GM12878 (cell line): ENCODE measurements at regions of chr6 and their contacts with region 1.

Region 1: GRCh38 chr6:49625140-49625539 is 11.5 kb downstream of the RHAG start:
- DNase-seq: no peak
- ATAC-seq: no peak
- H3K4me3 ChIP-seq: no peak overlapping the region
- H3K27ac ChIP-seq: no peak overlapping the region
- H3K4me1 ChIP-seq: no peaks in the 10 kb centered on the region
- H3K27me3 ChIP-seq: no peaks in the 10 kb centered on the region
- CTCF ChIP-seq: no peak
- EP300 ChIP-seq: no peak
- POLR2A ChIP-seq: no peak
- RAD21 ChIP-seq: no peak

Region 2: GRCh38 chr6:49849213-49849907 is 224.2 kb after region 1 on chr6:
- CTCF ChIA-PET with region 1: interaction called, 85 read pairs
- POLR2A ChIA-PET with region 1: no interaction called
- RAD21 ChIA-PET with region 1: interaction called, 24 read pairs
- SMC1A ChIA-PET with region 1: interaction called, 14 read pairs
- in situ Hi-C with region 1: loop called (anchors 5 kb)
- intact Hi-C with region 1: loop called (anchors 1 kb)
- DNase-seq: no peak
- ATAC-seq: peak; percentile 90
- H3K4me3 ChIP-seq: no peak overlapping the region
- H3K27ac ChIP-seq: no peak overlapping the region
- H3K4me1 ChIP-seq: no peaks in the 10 kb centered on the region
- H3K27me3 ChIP-seq: no peaks in the 10 kb centered on the region
- CTCF ChIP-seq: peak in 2 of 3 experiments; percentile 39 to 55; a peak in 5 of 6 replicates
- EP300 ChIP-seq: no peak
- POLR2A ChIP-seq: no peak
- RAD21 ChIP-seq: peak; percentile 61